HepG2 (cell line): ENCODE measurements at regions of chr18 and their contacts with region 1.

Region 1: DNA sequence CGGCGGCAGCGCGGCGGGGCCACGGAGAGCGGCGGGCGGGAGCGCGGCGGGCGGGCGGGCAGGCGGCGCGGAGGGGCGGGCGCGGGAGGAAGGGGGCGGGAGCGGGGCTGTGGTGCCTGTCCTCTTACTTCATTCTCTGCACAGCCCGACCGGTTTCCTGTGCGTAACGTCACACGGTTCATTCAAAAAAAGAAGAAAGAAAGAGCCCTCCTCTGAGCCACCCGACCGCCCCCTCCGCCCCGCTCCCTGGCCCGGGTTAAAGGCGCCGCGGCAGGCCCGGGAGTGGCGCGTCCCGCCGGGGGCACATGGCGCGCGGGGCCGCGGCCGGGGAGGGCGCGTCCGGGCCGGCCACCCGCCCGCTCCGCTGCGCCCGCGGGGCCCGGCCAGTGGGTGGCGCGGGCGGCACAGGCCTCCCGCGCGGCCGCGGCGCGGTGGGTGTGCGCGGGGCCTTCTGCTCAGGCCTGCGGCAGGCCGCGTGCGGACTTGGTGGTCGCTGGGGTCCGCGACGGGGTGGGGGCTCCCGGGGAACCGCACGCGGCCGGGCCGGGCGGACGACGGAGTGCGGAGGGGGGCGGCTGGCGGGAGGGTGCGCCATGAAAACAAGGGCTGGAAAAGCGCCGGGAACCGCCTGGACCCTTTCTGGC is 599 bp upstream of the BCL2 start:
- DNase-seq: peak; percentile 61
- ATAC-seq: peak; percentile 80
- H3K4me3 ChIP-seq: peak overlapping the region; percentile 56 to 80 (median 67)
- H3K27ac ChIP-seq: no peak overlapping the region
- H3K4me1 ChIP-seq: peaks cover 46% of the 10 kb centered on the region
- H3K27me3 ChIP-seq: peaks cover 0 to 26% of the 10 kb centered on the region in 2 experiments; a peak in 4 of 5 replicates
- CTCF ChIP-seq: no peak
- EP300 ChIP-seq: no peak
- POLR2A ChIP-seq: peak in 1 of 2 experiments; percentile 34; a peak in 1 of 4 replicates
- RAD21 ChIP-seq: no peak

Region 2: GRCh38 chr18:62912885-62913284 is 407.3 kb before region 1 on chr18:
- CTCF ChIA-PET with region 1: no interaction called
- POLR2A ChIA-PET with region 1: no interaction called
- in situ Hi-C with region 1: no loop called
- intact Hi-C with region 1: no loop called
- DNase-seq: no peak
- ATAC-seq: no peak
- H3K4me3 ChIP-seq: no peak overlapping the region
- H3K27ac ChIP-seq: no peak overlapping the region
- H3K4me1 ChIP-seq: no peaks in the 10 kb centered on the region
- H3K27me3 ChIP-seq: no peaks in the 10 kb centered on the region
- CTCF ChIP-seq: no peak
- EP300 ChIP-seq: no peak
- POLR2A ChIP-seq: no peak
- RAD21 ChIP-seq: no peak

Region 3: GRCh38 chr18:63119647-63120046 is 200.5 kb before region 1 on chr18:
- CTCF ChIA-PET with region 1: no interaction called
- POLR2A ChIA-PET with region 1: no interaction called
- in situ Hi-C with region 1: no loop called
- intact Hi-C with region 1: loop called (anchors 5 kb)
- DNase-seq: peak; percentile 6
- ATAC-seq: peak; percentile 73
- H3K4me3 ChIP-seq: no peak overlapping the region
- H3K27ac ChIP-seq: no peak overlapping the region
- H3K4me1 ChIP-seq: no peaks in the 10 kb centered on the region
- H3K27me3 ChIP-seq: no peaks in the 10 kb centered on the region
- CTCF ChIP-seq: peak; percentile 59
- EP300 ChIP-seq: no peak
- POLR2A ChIP-seq: no peak
- RAD21 ChIP-seq: no peak

Region 4: DNA sequence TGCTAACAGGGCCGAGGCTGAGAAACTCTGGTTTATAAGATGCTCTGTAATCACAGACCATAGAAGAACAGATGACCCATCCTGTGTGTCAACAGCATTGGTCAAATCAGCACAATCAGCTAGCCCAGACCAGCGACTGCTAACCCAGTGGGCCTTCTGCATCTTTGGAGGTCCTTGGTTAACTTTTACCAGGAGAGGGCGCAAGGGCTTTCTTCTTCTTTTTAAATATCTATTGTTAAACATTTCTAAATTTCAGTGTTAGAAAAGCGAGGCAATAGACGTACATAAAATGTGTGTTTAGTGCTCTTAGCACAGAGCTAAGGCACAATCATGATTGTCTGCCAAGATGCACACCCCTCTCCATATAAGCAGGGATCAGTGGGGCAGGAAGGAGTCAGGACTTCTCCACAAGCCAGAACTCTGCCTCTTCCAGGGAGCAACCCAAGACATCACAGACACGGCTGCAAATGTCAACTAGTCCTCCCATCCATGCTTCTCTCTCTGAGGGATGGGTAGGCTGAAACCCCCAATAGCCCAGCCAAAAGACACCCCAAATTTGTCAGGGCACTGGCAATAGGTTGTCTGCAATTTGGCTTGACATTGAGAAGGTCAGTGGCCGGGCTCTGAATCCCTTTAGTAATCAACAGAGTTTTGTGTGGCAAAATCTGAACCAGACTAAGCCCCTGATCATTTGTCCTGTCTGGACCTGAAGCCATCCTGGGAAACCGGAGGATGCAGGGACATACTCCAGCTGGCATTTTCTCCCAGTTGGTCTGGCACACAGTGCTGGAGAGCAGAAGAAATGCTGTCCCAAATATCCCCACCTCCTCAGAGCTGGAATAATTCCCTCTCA is 188.8 kb before region 1 on chr18:
- CTCF ChIA-PET with region 1: interaction called, 4 read pairs
- POLR2A ChIA-PET with region 1: no interaction called
- in situ Hi-C with region 1: loop called (anchors 10 kb)
- intact Hi-C with region 1: loop called (anchors 1 kb)
- DNase-seq: peak; percentile 16
- ATAC-seq: peak; percentile 70
- H3K4me3 ChIP-seq: no peak overlapping the region
- H3K27ac ChIP-seq: no peak overlapping the region
- H3K4me1 ChIP-seq: peaks cover 10% of the 10 kb centered on the region
- H3K27me3 ChIP-seq: peaks cover 0 to 7% of the 10 kb centered on the region in 2 experiments; a peak in 2 of 5 replicates
- CTCF ChIP-seq: peak; percentile 50
- EP300 ChIP-seq: no peak
- POLR2A ChIP-seq: no peak
- RAD21 ChIP-seq: no peak

Region 5: DNA sequence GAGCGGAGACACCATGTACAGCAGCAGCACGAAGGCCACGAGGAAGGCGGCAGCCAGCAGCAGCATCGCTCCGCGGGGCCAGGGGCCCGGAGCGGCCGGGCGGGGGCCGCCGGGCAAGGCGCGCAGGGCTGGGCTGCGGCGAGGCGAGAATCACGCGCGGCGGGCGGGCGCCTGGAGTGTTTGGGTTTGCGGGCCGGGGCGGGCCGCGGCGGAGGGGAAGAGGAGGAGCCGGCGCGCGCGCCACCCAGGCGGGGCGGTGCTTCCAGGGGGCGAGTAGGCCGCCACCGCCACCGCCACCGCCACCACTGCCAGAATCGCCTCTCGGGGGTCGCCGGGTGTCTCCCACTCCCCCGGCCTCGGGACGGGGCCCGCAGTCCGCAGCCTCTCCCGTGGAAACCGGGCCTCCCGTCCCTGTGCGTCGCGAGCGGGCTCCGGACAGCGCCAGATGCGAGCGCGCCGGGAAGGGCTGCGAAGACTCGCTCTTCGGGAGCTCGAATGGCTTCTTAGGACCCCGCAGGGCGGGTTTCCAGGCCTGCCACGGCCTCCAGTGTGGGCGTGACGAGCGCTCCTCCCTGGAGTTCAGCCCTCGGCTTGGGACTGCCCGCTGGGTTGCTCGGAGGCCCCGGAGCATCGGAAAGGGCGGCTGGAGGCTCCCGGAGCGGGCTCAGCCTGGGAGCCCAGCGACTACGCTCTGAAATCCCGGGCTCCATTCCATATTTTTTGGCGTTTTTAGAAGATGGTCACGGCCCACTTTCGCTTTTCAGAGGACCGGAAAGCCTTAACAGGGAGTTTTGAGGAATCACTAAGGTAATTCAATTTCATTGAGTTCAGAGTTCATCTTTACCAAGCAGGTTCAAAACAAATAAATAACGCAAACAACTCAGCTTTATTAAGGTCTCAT is 47.1 kb after region 1 on chr18 and contains the start of gene KDSR:
- CTCF ChIA-PET with region 1: no interaction called
- POLR2A ChIA-PET with region 1: interaction called, 9 read pairs
- in situ Hi-C with region 1: no loop called
- intact Hi-C with region 1: loop called (anchors 2 kb)
- DNase-seq: peak; percentile 94
- ATAC-seq: peak; percentile 96
- H3K4me3 ChIP-seq: peak within 1 kb of the TSS; percentile 80 to 96 (median 82)
- H3K27ac ChIP-seq: peak within 1 kb of the TSS; percentile 96
- H3K4me1 ChIP-seq: peaks cover 38% of the 10 kb centered on the region
- H3K27me3 ChIP-seq: no peaks in the 10 kb centered on the region; a peak in 1 of 5 replicates
- CTCF ChIP-seq: no peak
- EP300 ChIP-seq: peak in 1 of 2 experiments; percentile 14; a peak in 2 of 4 replicates
- POLR2A ChIP-seq: peak; percentile 92 to 97
- RAD21 ChIP-seq: peak; percentile 50; the same call in 1 of the 2 replicates
- total RNA-seq, gene KDSR: 8.2 and 10.4 TPM in 2 replicates

Region 6: GRCh38 chr18:63395503-63395902 is 75.3 kb after region 1 on chr18:
- CTCF ChIA-PET with region 1: no interaction called
- POLR2A ChIA-PET with region 1: no interaction called
- in situ Hi-C with region 1: no loop called
- intact Hi-C with region 1: no loop called
- DNase-seq: no peak
- ATAC-seq: no peak
- H3K4me3 ChIP-seq: no peak overlapping the region
- H3K27ac ChIP-seq: no peak overlapping the region
- H3K4me1 ChIP-seq: no peaks in the 10 kb centered on the region
- H3K27me3 ChIP-seq: no peaks in the 10 kb centered on the region
- CTCF ChIP-seq: no peak
- EP300 ChIP-seq: no peak
- POLR2A ChIP-seq: no peak
- RAD21 ChIP-seq: no peak

Region 7: DNA sequence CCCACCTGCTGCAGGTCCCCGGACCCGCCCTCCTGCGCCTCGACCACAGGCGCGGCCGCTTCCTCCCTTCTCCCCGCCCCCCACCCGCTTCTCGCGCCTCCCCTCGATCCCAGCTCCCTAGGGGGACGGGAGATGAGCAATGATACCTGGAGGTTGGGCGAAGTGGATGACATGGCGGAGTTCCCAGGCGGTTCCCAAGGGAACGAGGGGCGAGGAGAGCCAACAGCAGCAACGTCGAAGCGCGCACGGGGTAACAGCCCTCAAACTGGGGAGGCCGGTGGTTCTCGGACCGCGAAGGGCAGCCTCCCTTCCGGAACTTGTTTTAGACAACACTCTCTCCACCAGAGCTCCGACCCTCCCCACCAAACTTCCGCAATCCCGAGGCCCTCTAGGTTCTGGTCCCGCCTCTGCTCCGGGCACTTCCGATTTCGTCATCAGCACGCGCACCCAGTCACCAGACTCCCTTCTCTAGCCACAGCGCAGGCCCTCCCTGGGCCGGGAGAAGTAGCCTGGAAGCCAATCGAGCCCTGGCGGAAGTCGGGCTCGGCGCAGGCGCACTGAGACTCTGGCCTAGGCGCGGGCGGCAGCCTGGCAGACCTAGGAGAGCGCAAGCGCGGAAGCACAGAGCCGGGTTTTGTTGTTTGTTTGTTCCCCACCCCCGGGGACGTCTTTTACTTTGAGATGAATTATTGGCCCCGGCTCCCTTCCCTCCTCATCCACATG is 102.1 kb after region 1 on chr18 and contains the start of gene VPS4B:
- CTCF ChIA-PET with region 1: no interaction called
- POLR2A ChIA-PET with region 1: no interaction called
- in situ Hi-C with region 1: no loop called
- intact Hi-C with region 1: loop called (anchors 2 kb)
- DNase-seq: peak; percentile 98
- ATAC-seq: peak; percentile 98
- H3K4me3 ChIP-seq: peak within 1 kb of the TSS; percentile 77 to 96 (median 90)
- H3K27ac ChIP-seq: peak within 1 kb of the TSS; percentile 88
- H3K4me1 ChIP-seq: peaks cover 29% of the 10 kb centered on the region
- H3K27me3 ChIP-seq: no peaks in the 10 kb centered on the region; a peak in 1 of 5 replicates
- CTCF ChIP-seq: no peak
- EP300 ChIP-seq: no peak
- POLR2A ChIP-seq: peak; percentile 87 to 89
- RAD21 ChIP-seq: no peak
- total RNA-seq, gene VPS4B: 25.9 and 38.3 TPM in 2 replicates